ENCODE measurements at regions of chr10 and their contacts with region 1.

Region 1: GRCh38 chr10:90912174-90912573 is 8.7 kb downstream of the ANKRD1 start:
- DNase-seq: no peak
- ATAC-seq: no peak
- H3K4me3 ChIP-seq: no peak overlapping the region
- H3K27ac ChIP-seq: no peak overlapping the region
- H3K4me1 ChIP-seq: no peaks in the 10 kb centered on the region
- H3K27me3 ChIP-seq: no peaks in the 10 kb centered on the region; the same call in 1 of the 2 replicates
- CTCF ChIP-seq: no peak

Region 2: DNA sequence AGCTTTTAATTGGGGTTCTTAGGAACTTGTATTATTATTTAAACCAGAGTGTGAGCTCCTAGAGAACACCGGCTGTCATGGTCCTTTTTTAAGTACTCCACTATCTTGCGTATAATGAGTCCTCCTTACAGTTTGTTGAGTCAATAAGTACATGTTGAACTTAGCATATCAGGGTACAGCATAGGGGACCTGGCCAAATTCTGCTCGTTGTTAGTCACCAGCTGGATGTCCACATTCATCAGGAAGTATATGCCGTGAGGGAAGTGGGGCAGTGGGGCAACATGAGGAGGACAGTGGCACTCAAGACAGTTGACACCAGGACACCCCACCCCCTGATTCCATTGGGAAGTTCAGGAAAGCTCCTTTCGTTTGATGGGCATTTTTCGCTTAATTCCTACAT is 23.8 kb before region 1 on chr10:
- CTCF ChIA-PET with region 1: interaction called, 10 read pairs
- POLR2A ChIA-PET with region 1: no interaction called
- in situ Hi-C with region 1: no loop called
- intact Hi-C with region 1: no loop called
- DNase-seq: no peak
- ATAC-seq: no peak
- H3K4me3 ChIP-seq: no peak overlapping the region
- H3K27ac ChIP-seq: no peak overlapping the region
- H3K4me1 ChIP-seq: no peaks in the 10 kb centered on the region
- H3K27me3 ChIP-seq: no peaks in the 10 kb centered on the region
- CTCF ChIP-seq: no peak

Measured in Panc1 (cell line).